Endothelial cell of umbilical vein (primary cell): ENCODE measurements at regions of chr2 and their contacts with region 1.

Region 1: DNA sequence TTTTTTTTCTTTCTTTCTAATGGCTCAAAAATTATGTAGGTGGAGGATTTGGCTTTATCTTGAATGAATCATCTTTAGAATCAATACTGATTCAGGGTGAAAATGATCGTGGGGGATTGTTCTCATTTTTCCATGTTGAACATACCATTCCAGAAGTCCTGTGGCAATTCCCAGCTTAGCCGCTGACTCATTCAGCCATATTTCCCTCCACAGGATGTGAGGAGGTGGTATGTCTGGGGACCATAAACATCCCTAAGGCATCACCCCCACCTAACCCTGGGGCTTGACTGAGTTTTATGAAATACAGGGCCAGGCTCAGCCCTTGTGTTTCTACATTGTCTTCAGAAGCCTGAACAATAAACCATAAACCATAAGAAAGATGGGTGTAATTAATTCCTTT is 92.7 kb upstream of the FN1 start:
- DNase-seq: peak; percentile 98
- H3K4me3 ChIP-seq: no peak overlapping the region
- H3K27ac ChIP-seq: peak overlapping the region; percentile 99
- H3K4me1 ChIP-seq: peaks cover 44% of the 10 kb centered on the region
- H3K27me3 ChIP-seq: no peaks in the 10 kb centered on the region
- CTCF ChIP-seq: no peak
- POLR2A ChIP-seq: no peak

Region 2: DNA sequence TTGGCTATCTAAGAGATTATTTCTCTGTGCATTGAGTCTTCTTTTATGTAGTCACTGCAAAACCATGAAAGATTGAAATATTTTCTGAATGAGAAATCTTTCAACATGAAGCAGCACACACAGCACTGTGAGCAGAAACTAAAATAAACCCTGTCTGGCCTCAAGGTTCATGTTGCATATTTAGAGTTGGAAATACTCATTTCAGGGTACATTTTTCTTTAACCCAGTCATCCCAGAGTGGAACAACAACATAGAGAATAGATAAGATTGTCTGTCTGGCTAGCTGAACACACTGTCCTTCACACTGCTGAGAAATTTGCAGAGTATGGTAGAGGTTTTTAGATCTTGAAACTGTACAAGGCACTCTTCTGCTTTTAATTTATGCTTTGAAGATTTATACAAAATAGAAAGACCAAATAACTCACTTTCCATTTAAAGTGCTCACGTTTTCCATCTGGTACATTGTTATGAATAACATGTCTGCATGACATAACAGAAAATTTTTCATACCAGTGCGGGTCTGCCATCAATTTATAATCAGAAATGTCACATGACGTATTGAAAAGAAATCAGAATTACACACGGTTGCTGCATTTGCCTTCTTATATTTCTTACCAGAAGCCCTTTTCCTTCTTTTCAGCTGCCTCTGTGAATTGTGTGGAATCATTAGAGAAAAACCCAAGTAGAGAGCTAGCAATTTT is 67.7 kb before region 1 on chr2:
- CTCF ChIA-PET with region 1: no interaction called
- POLR2A ChIA-PET with region 1: no interaction called
- dilution Hi-C with region 1: no loop called
- intact Hi-C with region 1: loop called (anchors 1 kb)
- DNase-seq: peak; percentile 72
- H3K4me3 ChIP-seq: no peak overlapping the region
- H3K27ac ChIP-seq: peak overlapping the region; percentile 80
- H3K4me1 ChIP-seq: peaks cover 43% of the 10 kb centered on the region
- H3K27me3 ChIP-seq: no peaks in the 10 kb centered on the region
- CTCF ChIP-seq: no peak
- POLR2A ChIP-seq: no peak

Region 3: GRCh38 chr2:215540650-215541049 is 12.1 kb after region 1 on chr2:
- CTCF ChIA-PET with region 1: interaction called, 6 read pairs
- POLR2A ChIA-PET with region 1: interaction called, 3 read pairs
- dilution Hi-C with region 1: no loop called
- intact Hi-C with region 1: loop called (anchors 1 kb)
- DNase-seq: peak; percentile 95
- H3K4me3 ChIP-seq: no peak overlapping the region
- H3K27ac ChIP-seq: peak overlapping the region; percentile 79
- H3K4me1 ChIP-seq: peaks cover 24% of the 10 kb centered on the region
- H3K27me3 ChIP-seq: no peaks in the 10 kb centered on the region
- CTCF ChIP-seq: no peak
- POLR2A ChIP-seq: no peak

Region 4: DNA sequence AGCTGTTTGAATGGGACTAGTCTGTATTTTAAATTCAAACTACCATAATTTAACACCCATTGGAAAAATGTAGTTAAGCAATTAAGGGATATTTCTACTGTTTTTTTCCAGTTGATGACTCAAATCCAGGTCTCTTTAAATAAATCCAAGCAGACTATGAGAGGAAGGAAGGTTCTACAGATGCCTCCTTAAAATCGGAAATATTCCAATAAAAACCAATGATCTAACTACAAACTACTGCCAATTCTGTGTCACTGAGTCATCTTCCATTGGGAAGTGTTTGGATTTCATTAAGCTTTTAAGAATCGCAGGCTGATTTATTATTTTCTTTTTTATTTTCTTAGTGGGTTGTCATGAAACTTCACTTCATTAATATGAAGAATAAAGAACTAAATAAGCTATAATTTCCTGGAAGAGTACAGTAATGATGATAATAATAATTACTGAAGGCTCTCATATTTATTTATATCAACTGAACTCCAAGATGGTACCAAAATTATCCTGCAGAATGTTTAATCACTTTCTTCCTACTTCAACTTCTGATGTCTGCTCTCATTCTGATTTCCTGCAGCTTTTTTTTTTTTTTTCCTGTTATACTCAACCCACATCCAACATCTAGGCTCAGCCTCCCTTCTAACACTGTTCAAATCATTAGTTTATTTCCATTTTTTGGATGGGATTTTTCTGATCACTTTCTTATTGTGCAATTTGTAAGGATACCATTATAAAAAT is 73.6 kb after region 1 on chr2:
- CTCF ChIA-PET with region 1: no interaction called
- POLR2A ChIA-PET with region 1: no interaction called
- dilution Hi-C with region 1: no loop called
- intact Hi-C with region 1: loop called (anchors 1 kb)
- DNase-seq: peak; percentile 97
- H3K4me3 ChIP-seq: peak overlapping the region in 1 of 3 experiments; percentile 19
- H3K27ac ChIP-seq: peak overlapping the region; percentile 85
- H3K4me1 ChIP-seq: peaks cover 24% of the 10 kb centered on the region
- H3K27me3 ChIP-seq: no peaks in the 10 kb centered on the region
- CTCF ChIP-seq: no peak
- POLR2A ChIP-seq: peak; percentile 62

Region 5: GRCh38 chr2:215693193-215693998 is 164.8 kb after region 1 on chr2:
- CTCF ChIA-PET with region 1: interaction called, 3 read pairs
- POLR2A ChIA-PET with region 1: no interaction called
- dilution Hi-C with region 1: no loop called
- intact Hi-C with region 1: loop called (anchors 2 kb)
- DNase-seq: peak; percentile 85
- H3K4me3 ChIP-seq: no peak overlapping the region
- H3K27ac ChIP-seq: peak overlapping the region; percentile 83
- H3K4me1 ChIP-seq: peaks cover 33% of the 10 kb centered on the region
- H3K27me3 ChIP-seq: no peaks in the 10 kb centered on the region
- CTCF ChIP-seq: no peak
- POLR2A ChIP-seq: no peak

Region 6: GRCh38 chr2:215717501-215718381 is 189.2 kb after region 1 on chr2:
- CTCF ChIA-PET with region 1: no interaction called
- POLR2A ChIA-PET with region 1: no interaction called
- dilution Hi-C with region 1: no loop called
- intact Hi-C with region 1: loop called (anchors 1 kb)
- DNase-seq: peak; percentile 88
- H3K4me3 ChIP-seq: peak overlapping the region in 1 of 3 experiments; percentile 28
- H3K27ac ChIP-seq: peak overlapping the region; percentile 92
- H3K4me1 ChIP-seq: peaks cover 45% of the 10 kb centered on the region
- H3K27me3 ChIP-seq: no peaks in the 10 kb centered on the region
- CTCF ChIP-seq: no peak
- POLR2A ChIP-seq: no peak

Region 7: DNA sequence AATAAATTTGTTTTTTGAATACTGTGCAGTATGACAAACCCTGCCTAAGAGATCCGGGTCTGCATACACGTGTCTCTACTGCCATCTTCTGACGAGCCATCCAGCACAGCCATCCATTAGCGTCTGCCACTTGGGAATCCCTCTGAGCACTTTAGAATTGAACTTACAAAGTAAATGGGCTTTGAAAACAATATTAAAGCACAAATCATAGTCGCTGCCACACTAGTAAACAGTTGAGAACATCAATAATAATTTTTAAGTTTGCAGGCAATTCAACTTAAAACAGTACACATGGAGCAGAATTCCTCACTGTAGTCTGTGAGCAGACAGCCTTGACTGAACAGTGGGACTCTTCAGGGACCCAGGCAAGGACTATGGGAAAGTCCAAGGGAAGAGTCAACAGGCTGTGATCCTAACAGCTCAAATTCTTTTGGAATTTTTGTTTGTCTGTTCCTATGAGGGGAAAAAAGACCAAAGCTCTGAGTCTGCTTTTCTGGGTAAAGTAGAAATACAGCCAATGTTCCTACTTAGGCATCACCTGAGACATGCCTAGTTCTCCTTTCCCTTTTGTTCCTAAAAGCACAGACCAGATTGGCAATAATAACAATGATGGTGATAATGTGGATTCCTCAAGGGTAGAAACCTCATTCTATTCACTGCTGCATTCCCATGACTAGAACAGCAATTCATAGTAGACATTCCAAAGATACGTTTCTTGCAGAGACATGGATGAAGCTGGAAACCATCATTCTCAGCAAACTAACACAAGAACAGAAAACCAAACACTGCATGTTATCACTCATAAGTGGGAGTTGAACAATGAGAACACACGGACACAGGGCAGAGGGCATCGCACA is 391.9 kb after region 1 on chr2:
- CTCF ChIA-PET with region 1: no interaction called
- POLR2A ChIA-PET with region 1: no interaction called
- dilution Hi-C with region 1: no loop called
- intact Hi-C with region 1: loop called (anchors 2 kb)
- DNase-seq: peak; percentile 87
- H3K4me3 ChIP-seq: no peak overlapping the region
- H3K27ac ChIP-seq: no peak overlapping the region
- H3K4me1 ChIP-seq: peaks cover 12% of the 10 kb centered on the region
- H3K27me3 ChIP-seq: no peaks in the 10 kb centered on the region
- CTCF ChIP-seq: peak; percentile 76 to 93
- POLR2A ChIP-seq: no peak